Naive thymus-derived CD4-positive, alpha-beta T cell (primary cell): ENCODE measurements at regions of chr1 and their contacts with region 1.

Region 1: GRCh38 chr1:218182455-218182854 is 102.6 kb upstream of the RRP15 start:
- DNase-seq: no peak
- ATAC-seq: no peak
- H3K4me3 ChIP-seq: no peak overlapping the region
- H3K4me3 Mint-ChIP-seq: no peak overlapping the region
- H3K27ac ChIP-seq: no peak overlapping the region
- H3K27ac Mint-ChIP-seq: no peak overlapping the region
- H3K4me1 ChIP-seq: no peaks in the 10 kb centered on the region
- H3K4me1 Mint-ChIP-seq: no peaks in the 10 kb centered on the region
- H3K27me3 ChIP-seq: no peaks in the 10 kb centered on the region
- H3K27me3 Mint-ChIP-seq: peaks cover 0 to 18% (median 4%) of the 10 kb centered on the region in 5 donors

Region 2: GRCh38 chr1:218217040-218217439 is 34.6 kb after region 1 on chr1:
- CTCF ChIA-PET with region 1: no interaction called
- POLR2A ChIA-PET with region 1: no interaction called
- intact Hi-C with region 1: loop called in 1 of 2 experiments (anchors 1 kb)
- DNase-seq: no peak
- ATAC-seq: no peak
- H3K4me3 ChIP-seq: no peak overlapping the region
- H3K4me3 Mint-ChIP-seq: no peak overlapping the region
- H3K27ac ChIP-seq: no peak overlapping the region
- H3K27ac Mint-ChIP-seq: no peak overlapping the region
- H3K4me1 ChIP-seq: no peaks in the 10 kb centered on the region
- H3K4me1 Mint-ChIP-seq: no peaks in the 10 kb centered on the region
- H3K27me3 ChIP-seq: no peaks in the 10 kb centered on the region
- H3K27me3 Mint-ChIP-seq: peaks cover 4 to 41% (median 26%) of the 10 kb centered on the region in 5 donors